ENCODE measurements at regions of chr15 and their contacts with region 1.

Region 1: GRCh38 chr15:56245871-56246814 is 2.5 kb upstream of the RFX7 start:
- DNase-seq: peak; percentile 65 to 97 (median 80)

Region 2: DNA sequence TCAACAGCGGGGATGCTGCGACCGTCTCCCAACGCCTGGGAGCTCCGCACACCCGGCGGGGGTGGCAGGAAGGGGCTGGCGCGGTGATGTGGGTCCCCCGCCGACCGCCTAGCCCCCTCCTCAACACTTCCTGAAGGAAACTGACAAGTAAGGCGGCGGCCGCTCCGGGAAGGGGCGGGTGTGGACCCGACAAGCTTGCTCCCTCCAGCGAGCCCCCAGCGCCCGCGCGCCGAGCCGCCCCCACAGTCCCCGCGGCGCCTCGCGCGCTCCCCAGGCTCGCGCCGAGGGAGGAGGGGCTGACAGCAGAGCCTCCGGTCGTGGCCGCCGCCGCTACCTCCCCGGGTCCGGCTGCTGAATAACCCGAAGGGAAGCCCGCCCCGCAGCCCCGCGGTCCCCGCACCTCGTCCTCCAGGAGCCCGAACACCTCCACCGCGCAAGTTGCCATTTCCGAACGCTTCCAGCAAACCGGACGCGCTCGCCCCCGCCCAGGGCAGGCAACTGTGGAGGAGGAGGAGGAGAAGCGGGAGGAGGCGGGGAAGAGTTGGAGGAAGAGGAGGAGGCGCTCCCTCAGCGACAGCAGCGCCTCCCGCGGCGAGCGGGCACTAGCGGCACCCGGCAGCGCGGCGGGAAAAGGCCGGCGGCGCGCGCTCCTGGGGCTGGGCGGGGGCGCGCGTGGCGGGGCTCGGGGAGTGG is 252.9 kb before region 1 on chr15 and contains the start of gene NEDD4:
- intact Hi-C with region 1: loop called (anchors 5 kb)
- DNase-seq: peak; percentile 70 to 97 (median 81)

Region 3: GRCh38 chr15:56192659-56193442 is 53.3 kb before region 1 on chr15:
- intact Hi-C with region 1: no loop called
- DNase-seq: peak in 2 of 10 donors; percentile 45 to 59

Region 4: GRCh38 chr15:56428821-56429458 is 182.8 kb after region 1 on chr15:
- intact Hi-C with region 1: loop called (anchors 5 kb)
- DNase-seq: no peak